Caco-2 (cell line): ENCODE measurements at regions of chr17 and their contacts with region 1.

Region 1: GRCh38 chr17:18087610-18088491 is at the start of gene DRG2:
- DNase-seq: peak; percentile 95 to 98
- H3K4me3 ChIP-seq: peak within 1 kb of the TSS; percentile 79
- H3K4me3 Mint-ChIP-seq: peak within 1 kb of the TSS; percentile 97
- H3K27ac Mint-ChIP-seq: peak within 1 kb of the TSS; percentile 97
- H3K4me1 ChIP-seq: peaks cover 9% of the 10 kb centered on the region
- H3K4me1 Mint-ChIP-seq: peaks cover 21% of the 10 kb centered on the region
- H3K27me3 ChIP-seq: no peaks in the 10 kb centered on the region
- H3K27me3 Mint-ChIP-seq: no peaks in the 10 kb centered on the region
- CTCF ChIP-seq: peak in 1 of 2 experiments; percentile 31
- total RNA-seq, gene DRG2: 47.9 and 54.8 TPM in 2 replicates

Region 2: GRCh38 chr17:17724307-17725010 is 363.4 kb before region 1 on chr17:
- CTCF ChIA-PET with region 1: no interaction called
- POLR2A ChIA-PET with region 1: interaction called, 10 read pairs
- intact Hi-C with region 1: no loop called
- DNase-seq: no peak
- H3K4me3 ChIP-seq: no peak overlapping the region
- H3K4me3 Mint-ChIP-seq: peak overlapping the region; percentile 64
- H3K27ac Mint-ChIP-seq: no peak overlapping the region
- H3K4me1 ChIP-seq: no peaks in the 10 kb centered on the region; the same call in 1 of the 2 replicates
- H3K4me1 Mint-ChIP-seq: peaks cover 9% of the 10 kb centered on the region
- H3K27me3 ChIP-seq: no peaks in the 10 kb centered on the region
- H3K27me3 Mint-ChIP-seq: no peaks in the 10 kb centered on the region
- CTCF ChIP-seq: no peak

Region 3: GRCh38 chr17:18105027-18105426 is 17.2 kb after region 1 on chr17:
- CTCF ChIA-PET with region 1: no interaction called
- POLR2A ChIA-PET with region 1: no interaction called
- intact Hi-C with region 1: no loop called
- DNase-seq: no peak
- H3K4me3 ChIP-seq: no peak overlapping the region
- H3K4me3 Mint-ChIP-seq: no peak overlapping the region
- H3K27ac Mint-ChIP-seq: no peak overlapping the region
- H3K4me1 ChIP-seq: no peaks in the 10 kb centered on the region
- H3K4me1 Mint-ChIP-seq: no peaks in the 10 kb centered on the region
- H3K27me3 ChIP-seq: no peaks in the 10 kb centered on the region
- H3K27me3 Mint-ChIP-seq: no peaks in the 10 kb centered on the region
- CTCF ChIP-seq: no peak